Gastrocnemius medialis (tissue), 4 donors: ENCODE measurements at regions of chr9 and their contacts with region 1.

Region 1: DNA sequence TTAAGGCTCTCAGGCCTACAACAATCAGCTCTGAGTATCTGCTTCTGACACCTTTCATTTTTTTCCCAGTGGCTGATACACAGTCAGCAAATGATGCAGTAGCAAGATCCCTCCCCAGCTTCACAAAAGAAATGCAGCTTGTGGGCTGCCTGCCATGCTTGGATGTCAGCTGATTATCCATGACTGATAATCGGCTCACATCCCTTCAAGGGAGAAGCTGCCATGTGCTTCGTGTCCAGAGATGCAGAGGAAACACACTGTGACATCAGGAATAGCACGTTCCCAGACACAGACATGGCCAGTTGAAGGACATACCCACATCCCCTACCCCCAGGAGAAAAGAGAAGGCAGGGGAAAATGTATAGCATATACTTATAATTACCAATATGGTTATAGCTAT is 27.9 kb downstream of the TMEM215 start:
- DNase-seq: no peak
- ATAC-seq: no peak
- H3K4me3 ChIP-seq: no peak overlapping the region
- H3K27ac ChIP-seq: no peak overlapping the region
- H3K4me1 ChIP-seq: no peaks in the 10 kb centered on the region
- H3K27me3 ChIP-seq: no peaks in the 10 kb centered on the region
- CTCF ChIP-seq: no peak
- POLR2A ChIP-seq: no peak

Region 2: GRCh38 chr9:32603914-32604741 is 207.1 kb before region 1 on chr9:
- in situ Hi-C with region 1: loop called in 1 of 4 experiments (anchors 25 kb)
- intact Hi-C with region 1: no loop called
- DNase-seq: no peak
- ATAC-seq: no peak
- H3K4me3 ChIP-seq: no peak overlapping the region
- H3K27ac ChIP-seq: no peak overlapping the region
- H3K4me1 ChIP-seq: no peaks in the 10 kb centered on the region
- H3K27me3 ChIP-seq: no peaks in the 10 kb centered on the region
- CTCF ChIP-seq: no peak
- POLR2A ChIP-seq: no peak

Region 3: DNA sequence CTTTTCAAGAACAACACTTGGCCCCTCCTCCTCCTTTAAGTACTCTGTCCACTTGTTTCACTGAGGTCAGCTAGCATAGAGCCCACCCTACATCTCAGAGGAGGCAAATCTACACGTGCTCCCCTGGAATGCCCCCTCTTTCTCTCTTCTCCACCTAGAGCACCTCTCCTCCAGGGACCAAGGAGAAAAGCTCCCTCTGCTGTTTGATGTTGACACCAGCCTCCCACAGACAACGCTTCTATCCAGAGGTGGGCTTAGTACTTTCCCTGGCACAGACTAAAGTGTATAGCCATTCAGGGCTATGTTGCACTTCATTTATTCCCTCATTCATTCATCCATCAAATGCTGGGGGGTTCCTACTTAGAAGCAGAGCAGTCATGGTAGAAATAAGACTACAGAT is 107.6 kb before region 1 on chr9:
- in situ Hi-C with region 1: loop called in 1 of 4 experiments (anchors 25 kb)
- intact Hi-C with region 1: no loop called
- DNase-seq: no peak
- ATAC-seq: no peak
- H3K4me3 ChIP-seq: no peak overlapping the region
- H3K27ac ChIP-seq: no peak overlapping the region
- H3K4me1 ChIP-seq: no peaks in the 10 kb centered on the region
- H3K27me3 ChIP-seq: no peaks in the 10 kb centered on the region
- CTCF ChIP-seq: no peak
- POLR2A ChIP-seq: no peak